CD14-positive monocyte (primary cell): ENCODE measurements at regions of chr11 and their contacts with region 1.

Region 1: DNA sequence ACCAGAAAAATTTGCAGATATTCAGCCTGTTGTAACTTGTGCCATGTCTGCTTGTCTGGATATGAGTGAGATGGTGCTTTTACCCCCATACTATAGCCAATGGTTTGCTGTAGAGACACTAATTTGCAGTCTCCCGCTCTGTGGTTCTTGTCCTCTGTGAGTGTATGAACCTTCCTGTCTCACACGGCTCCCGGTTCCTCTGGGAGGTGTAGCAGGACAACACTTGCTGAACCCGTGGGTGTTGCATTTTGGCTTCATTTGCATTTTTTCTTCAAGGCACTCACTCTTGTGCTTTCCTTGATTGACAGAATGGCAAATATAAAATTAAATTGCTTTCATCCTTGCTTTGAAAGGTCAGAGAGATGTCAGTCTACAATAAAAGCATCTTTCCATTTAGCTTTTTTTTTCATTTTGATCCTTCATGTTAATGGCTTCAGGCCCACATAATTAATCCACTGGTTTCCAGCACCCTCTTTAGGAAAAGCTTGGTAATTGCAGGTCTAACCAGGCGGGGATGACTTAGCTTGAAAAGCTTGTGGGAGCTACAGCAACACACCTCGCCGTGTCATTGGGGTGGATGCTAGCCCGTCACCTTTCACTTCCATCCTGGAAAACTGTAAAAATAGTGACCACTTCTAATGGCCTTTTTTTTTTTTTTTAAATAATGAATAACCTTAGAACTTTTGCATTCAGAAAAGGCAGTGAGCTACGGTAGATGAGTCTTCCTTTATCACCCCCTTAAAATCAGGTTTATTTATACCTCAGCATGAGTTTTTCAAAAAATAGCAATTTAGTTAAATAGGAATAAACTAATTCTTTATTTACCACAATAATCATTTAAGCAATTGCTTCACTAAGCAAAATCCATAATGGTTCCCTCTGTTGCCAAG is 27.4 kb upstream of the ST14 start:
- DNase-seq: peak; percentile 59 to 72 (median 67)
- H3K4me3 ChIP-seq: no peak overlapping the region
- H3K4me3 Mint-ChIP-seq: no peak overlapping the region
- H3K27ac ChIP-seq: peak overlapping the region; percentile 22 to 72
- H3K27ac Mint-ChIP-seq: peak overlapping the region; percentile 74 to 92 (median 82)
- H3K4me1 ChIP-seq: peaks cover 4 to 5% of the 10 kb centered on the region in 2 donors
- H3K4me1 Mint-ChIP-seq: peaks cover 10% of the 10 kb centered on the region
- H3K27me3 ChIP-seq: no peaks in the 10 kb centered on the region
- H3K27me3 Mint-ChIP-seq: peaks cover 0 to 2% (median 0%) of the 10 kb centered on the region in 3 donors
- CTCF ChIP-seq: peak; percentile 94

Region 2: DNA sequence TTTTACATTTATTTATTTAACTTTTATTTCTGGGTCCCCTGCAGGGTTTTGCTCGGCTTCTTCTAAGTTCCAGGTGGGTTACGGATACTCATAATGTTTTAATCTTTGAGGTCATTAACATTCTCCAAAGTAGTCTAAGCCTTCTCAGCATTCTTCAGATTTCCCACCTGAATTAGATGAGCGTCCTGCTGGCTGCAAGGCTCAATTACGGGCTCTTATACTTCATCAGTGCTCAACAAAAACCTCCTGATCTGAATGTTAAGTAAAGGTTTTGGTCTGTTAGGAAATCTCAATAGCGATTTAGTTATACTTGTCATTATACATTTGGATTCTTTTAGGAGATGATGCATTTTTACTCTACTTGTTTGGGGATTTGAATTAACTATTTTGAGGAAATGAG is 209.5 kb before region 1 on chr11:
- intact Hi-C with region 1: loop called (anchors 2 kb)
- DNase-seq: no peak
- H3K4me3 ChIP-seq: no peak overlapping the region
- H3K4me3 Mint-ChIP-seq: no peak overlapping the region
- H3K27ac ChIP-seq: no peak overlapping the region
- H3K27ac Mint-ChIP-seq: no peak overlapping the region
- H3K4me1 ChIP-seq: peaks cover 16 to 28% of the 10 kb centered on the region in 2 donors
- H3K4me1 Mint-ChIP-seq: peaks cover 28% of the 10 kb centered on the region
- H3K27me3 ChIP-seq: no peaks in the 10 kb centered on the region
- H3K27me3 Mint-ChIP-seq: no peaks in the 10 kb centered on the region
- CTCF ChIP-seq: no peak

Region 3: DNA sequence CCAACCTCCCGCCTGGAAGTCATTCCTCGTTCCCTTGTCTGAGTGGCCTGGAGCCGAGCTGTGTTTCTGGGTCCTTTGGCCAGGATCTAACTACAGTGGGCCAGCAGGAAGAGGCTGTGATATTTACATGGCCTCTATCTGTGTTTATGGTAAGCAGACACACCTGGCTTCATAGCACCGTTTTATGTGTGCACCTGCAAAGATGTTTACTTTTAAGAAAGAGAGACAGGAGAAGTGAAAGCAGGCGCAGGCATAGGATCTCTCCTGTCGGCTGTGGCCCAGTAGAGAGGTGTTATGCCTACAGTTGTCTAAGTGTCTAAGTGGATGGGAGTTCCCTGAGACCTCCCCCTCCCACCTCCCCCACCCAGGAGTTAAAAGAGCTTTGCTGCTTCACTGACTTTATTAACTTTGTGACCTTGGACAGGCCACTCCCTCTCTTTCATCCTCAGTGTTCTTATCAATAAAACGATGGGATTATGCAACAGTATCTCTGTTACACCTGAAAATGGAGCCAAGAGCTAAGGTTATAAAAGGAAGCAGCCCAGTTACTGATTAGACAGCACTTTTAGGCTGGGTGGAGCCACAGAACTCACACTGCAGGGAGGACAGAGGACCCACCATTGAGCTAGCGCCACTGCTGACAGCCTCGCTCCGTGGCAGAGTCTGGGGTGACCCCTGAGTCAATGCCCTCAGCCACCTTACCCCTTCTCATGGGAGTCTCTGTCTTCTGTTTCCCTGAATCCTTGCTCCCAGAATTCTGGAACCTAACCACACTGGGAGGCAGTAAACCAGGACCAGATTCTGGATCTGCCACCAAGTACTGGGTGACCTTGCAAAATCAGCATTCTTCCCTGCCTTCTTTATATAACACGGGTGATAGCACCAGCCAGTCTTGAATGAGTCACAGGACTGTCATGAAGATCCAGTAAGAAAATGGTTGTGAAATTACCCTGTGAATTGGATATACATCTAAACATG is 49.4 kb after region 1 on chr11:
- intact Hi-C with region 1: no loop called
- DNase-seq: peak; percentile 61 to 80 (median 76)
- H3K4me3 ChIP-seq: no peak overlapping the region
- H3K4me3 Mint-ChIP-seq: no peak overlapping the region
- H3K27ac ChIP-seq: peak overlapping the region in 1 of 2 donors; percentile 42
- H3K27ac Mint-ChIP-seq: peak overlapping the region; percentile 9 to 94 (median 78)
- H3K4me1 ChIP-seq: peaks cover 37 to 43% of the 10 kb centered on the region in 2 donors
- H3K4me1 Mint-ChIP-seq: peaks cover 45% of the 10 kb centered on the region
- H3K27me3 ChIP-seq: no peaks in the 10 kb centered on the region
- H3K27me3 Mint-ChIP-seq: no peaks in the 10 kb centered on the region
- CTCF ChIP-seq: no peak

Region 4: DNA sequence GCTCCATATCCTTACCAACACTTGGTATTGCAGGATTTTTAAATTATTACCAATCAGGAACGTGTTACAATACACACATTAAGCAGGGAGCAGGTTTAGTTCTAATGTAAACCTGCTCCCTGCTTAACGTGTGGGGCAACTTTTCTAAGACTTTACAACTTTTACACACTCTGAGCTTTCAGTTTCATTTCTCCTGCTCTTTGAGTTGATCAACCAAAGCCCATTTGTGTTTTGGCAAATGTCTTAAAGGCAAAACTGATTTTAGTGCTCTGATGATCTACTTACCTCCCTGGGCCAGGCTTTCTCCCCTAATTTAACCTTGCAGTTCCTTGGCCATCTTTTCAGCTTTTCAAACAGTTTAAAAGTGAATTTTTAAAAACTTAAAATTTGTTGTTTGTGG is 111.6 kb after region 1 on chr11:
- intact Hi-C with region 1: no loop called
- DNase-seq: no peak
- H3K4me3 ChIP-seq: no peak overlapping the region
- H3K4me3 Mint-ChIP-seq: peak overlapping the region in 1 of 2 donors; percentile 8
- H3K27ac ChIP-seq: peak overlapping the region in 1 of 2 donors; percentile 4
- H3K27ac Mint-ChIP-seq: peak overlapping the region in 2 of 7 donors; percentile 11 to 30
- H3K4me1 ChIP-seq: peaks cover 0 to 7% of the 10 kb centered on the region in 2 donors
- H3K4me1 Mint-ChIP-seq: peaks cover 5% of the 10 kb centered on the region
- H3K27me3 ChIP-seq: no peaks in the 10 kb centered on the region
- H3K27me3 Mint-ChIP-seq: no peaks in the 10 kb centered on the region
- CTCF ChIP-seq: no peak

Region 5: DNA sequence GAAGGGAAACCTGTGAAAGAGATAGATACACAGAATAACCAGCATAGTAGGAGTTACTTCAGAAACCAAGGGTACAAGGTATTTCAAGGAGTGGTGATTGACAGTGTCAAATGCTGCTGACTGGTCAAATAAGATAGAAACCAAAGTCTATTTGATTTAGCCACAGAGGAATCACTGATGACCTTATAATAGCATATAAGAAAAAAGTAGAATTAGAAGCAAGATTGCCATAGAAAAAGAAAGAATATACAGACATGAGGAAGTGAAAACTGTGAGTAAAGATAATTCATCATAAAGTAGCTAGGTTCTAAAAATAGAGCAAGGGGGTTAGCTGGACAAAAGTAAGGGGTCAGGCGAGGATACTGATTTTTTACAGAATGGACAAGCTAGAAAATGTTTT is 168.4 kb after region 1 on chr11:
- intact Hi-C with region 1: no loop called
- DNase-seq: peak in 2 of 3 donors; percentile 3 to 10
- H3K4me3 ChIP-seq: no peak overlapping the region
- H3K4me3 Mint-ChIP-seq: no peak overlapping the region
- H3K27ac ChIP-seq: peak overlapping the region in 1 of 2 donors; percentile 56
- H3K27ac Mint-ChIP-seq: peak overlapping the region in 4 of 7 donors; percentile 37 to 71 (median 54)
- H3K4me1 ChIP-seq: peaks cover 17 to 35% of the 10 kb centered on the region in 2 donors
- H3K4me1 Mint-ChIP-seq: peaks cover 44% of the 10 kb centered on the region
- H3K27me3 ChIP-seq: no peaks in the 10 kb centered on the region
- H3K27me3 Mint-ChIP-seq: no peaks in the 10 kb centered on the region
- CTCF ChIP-seq: no peak